ENCODE measurements at regions of chr12 and their contacts with region 1.

Region 1: GRCh38 chr12:6752921-6753771 is at the start of gene MLF2:
- DNase-seq: peak; percentile 99
- ATAC-seq: peak; percentile 92
- H3K4me3 Mint-ChIP-seq: peak within 1 kb of the TSS; percentile 90
- H3K27ac Mint-ChIP-seq: peak within 1 kb of the TSS; percentile 98
- H3K4me1 Mint-ChIP-seq: peaks cover 25% of the 10 kb centered on the region
- H3K27me3 Mint-ChIP-seq: peaks cover 2% of the 10 kb centered on the region
- total RNA-seq, gene MLF2: 102 to 113 TPM

Region 2: DNA sequence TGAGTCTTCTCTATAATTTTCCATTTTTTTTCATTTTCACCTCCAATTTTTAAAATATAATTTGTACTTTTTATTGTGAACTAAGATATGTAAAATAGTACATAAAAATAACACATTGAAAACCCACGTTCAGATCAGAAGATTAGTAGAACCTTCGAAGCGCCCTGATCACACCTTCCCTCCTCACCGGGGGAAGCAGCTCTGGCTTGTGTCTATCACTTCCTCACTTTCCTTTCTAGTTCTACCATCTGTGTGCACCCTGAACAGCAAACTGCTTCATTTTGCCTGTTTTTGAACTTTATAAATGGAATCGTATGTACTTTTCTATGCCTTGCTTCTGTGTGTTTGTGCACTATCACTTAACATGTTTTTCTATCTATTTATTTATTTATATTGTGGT is 320.2 kb before region 1 on chr12:
- CTCF ChIA-PET with region 1: no interaction called
- DNase-seq: no peak
- ATAC-seq: no peak
- H3K4me3 Mint-ChIP-seq: no peak overlapping the region
- H3K27ac Mint-ChIP-seq: peak overlapping the region; percentile 72
- H3K4me1 Mint-ChIP-seq: peaks cover 49% of the 10 kb centered on the region
- H3K27me3 Mint-ChIP-seq: no peaks in the 10 kb centered on the region

Region 3: DNA sequence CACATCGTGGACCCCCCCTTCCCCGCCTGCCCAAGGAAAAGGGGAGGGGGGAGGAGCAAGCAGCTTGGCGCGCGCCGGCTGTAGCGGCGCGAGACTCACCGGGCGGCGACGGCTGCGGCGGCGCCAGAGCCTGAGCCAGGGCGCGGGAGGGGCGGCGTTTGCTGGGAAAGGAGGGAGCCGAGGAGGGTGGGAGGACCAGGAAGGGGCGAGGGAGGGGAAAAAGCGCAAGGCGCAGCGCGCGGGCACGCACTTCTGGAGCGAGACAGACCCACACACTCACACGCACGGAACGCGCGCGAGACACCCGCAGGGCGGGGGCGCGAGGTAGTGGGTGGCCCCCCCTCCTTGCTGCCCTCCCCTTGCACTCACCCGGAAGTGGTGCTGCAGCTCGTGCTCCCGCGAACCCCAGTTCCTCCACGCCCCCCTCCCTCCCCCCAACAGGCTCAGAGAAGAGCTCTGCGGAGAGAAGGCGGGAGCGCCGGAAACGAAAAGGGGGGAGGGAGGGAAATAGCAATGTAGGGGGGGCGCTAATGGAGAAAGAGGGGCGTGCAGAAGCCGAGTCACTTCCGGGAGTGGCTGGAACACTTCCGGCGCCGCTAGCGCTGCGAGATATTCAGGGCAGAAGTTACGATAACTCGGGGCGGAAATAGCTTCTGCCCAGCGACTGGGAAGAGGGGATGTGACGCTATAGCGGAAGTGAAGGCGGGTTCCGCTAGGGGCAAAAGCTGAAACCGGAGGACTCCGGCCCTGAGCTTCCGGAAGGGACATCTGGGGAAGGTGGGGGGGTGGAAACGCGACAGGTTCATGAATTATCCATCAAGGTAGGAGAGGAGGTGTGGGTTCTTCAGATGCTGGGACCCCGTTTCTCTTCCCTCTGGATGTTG is 63.9 kb before region 1 on chr12 and contains the start of gene ZNF384:
- CTCF ChIA-PET with region 1: interaction called, 18 read pairs
- DNase-seq: peak; percentile 99
- ATAC-seq: peak; percentile 84
- H3K4me3 Mint-ChIP-seq: peak within 1 kb of the TSS; percentile 96
- H3K27ac Mint-ChIP-seq: peak within 1 kb of the TSS; percentile 96
- H3K4me1 Mint-ChIP-seq: peaks cover 44% of the 10 kb centered on the region
- H3K27me3 Mint-ChIP-seq: no peaks in the 10 kb centered on the region
- total RNA-seq, gene ZNF384: 76.3 to 76.4 TPM

Region 4: DNA sequence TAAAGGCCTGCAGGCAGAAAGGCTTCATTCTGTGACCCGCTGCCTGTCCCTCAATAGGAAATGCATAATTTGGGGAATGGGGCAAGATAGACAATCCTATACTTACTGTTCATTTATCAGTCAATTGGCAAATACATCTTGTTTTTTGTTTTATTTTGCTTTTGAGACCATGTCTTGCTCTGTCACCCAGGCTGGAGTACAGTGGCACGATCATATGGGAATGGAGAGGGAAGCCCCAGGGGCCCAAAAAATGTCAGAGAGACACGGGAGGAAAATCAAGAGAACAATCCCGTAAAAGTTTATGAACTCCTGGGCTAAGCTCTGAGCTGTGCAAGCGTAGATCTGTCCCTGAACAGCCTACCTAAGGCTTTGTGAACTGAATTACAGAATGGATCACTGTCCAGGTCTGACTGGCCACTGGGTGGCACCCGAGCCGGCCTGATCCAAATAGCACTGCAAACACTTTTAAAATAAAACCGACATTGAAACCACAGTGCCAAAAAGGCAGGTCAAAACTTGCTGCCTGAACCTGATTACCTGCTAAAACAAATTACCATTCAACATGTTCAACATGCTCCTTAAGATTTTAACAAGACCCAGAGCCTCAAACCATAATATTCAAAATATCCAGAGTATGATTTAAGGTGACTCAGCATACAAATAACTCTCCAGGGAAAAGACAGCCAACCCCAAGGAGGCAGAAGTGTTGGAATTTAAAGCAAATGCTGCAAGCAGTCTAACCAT is 17.5 kb before region 1 on chr12:
- CTCF ChIA-PET with region 1: interaction called, 15 read pairs
- DNase-seq: peak; percentile 72
- ATAC-seq: peak; percentile 84
- H3K4me3 Mint-ChIP-seq: no peak overlapping the region
- H3K27ac Mint-ChIP-seq: peak overlapping the region; percentile 22
- H3K4me1 Mint-ChIP-seq: peaks cover 9% of the 10 kb centered on the region
- H3K27me3 Mint-ChIP-seq: no peaks in the 10 kb centered on the region

Region 5: DNA sequence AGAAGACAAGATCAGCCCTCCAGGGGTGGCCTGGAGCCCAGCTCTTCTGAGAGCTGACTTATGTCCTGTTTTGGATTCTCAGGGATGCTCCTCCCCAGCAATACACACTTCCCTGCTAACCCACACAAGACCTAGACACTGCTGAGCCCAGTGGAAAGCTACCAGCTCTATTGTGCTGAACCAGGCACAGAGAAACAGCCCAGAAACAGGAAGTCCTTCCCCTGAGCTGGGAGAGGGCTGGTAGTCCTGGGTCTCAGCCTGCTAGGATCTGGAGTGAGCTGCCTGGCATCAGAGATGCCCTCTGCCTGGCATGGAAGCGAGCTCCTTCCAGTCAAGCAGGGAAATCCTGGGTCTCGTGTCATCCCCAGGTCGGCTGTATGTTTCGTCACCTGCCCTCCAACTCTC is 17.9 kb after region 1 on chr12:
- CTCF ChIA-PET with region 1: interaction called, 117 read pairs
- DNase-seq: no peak
- ATAC-seq: no peak
- H3K4me3 Mint-ChIP-seq: no peak overlapping the region
- H3K27ac Mint-ChIP-seq: peak overlapping the region; percentile 90
- H3K4me1 Mint-ChIP-seq: peaks cover 47% of the 10 kb centered on the region
- H3K27me3 Mint-ChIP-seq: no peaks in the 10 kb centered on the region

Region 6: GRCh38 chr12:6792522-6793201 is 39.5 kb after region 1 on chr12:
- CTCF ChIA-PET with region 1: interaction called, 11 read pairs
- DNase-seq: no peak
- ATAC-seq: peak; percentile 43
- H3K4me3 Mint-ChIP-seq: no peak overlapping the region
- H3K27ac Mint-ChIP-seq: no peak overlapping the region
- H3K4me1 Mint-ChIP-seq: peaks cover 23% of the 10 kb centered on the region
- H3K27me3 Mint-ChIP-seq: peaks cover 29% of the 10 kb centered on the region

Region 7: GRCh38 chr12:6839482-6840201 is 86.5 kb after region 1 on chr12:
- CTCF ChIA-PET with region 1: interaction called, 60 read pairs
- DNase-seq: no peak
- ATAC-seq: no peak
- H3K4me3 Mint-ChIP-seq: no peak overlapping the region
- H3K27ac Mint-ChIP-seq: no peak overlapping the region
- H3K4me1 Mint-ChIP-seq: peaks cover 3% of the 10 kb centered on the region
- H3K27me3 Mint-ChIP-seq: no peaks in the 10 kb centered on the region